Activated CD8-positive, alpha-beta memory T cell treated with anti-CD3 and anti-CD28 coated beads, Interleukin-2, amount 10 ng/mL, durations not matched to agents 7 days and 5 days (primary cell): ENCODE measurements at regions of chr1 and their contacts with region 1.

Region 1: DNA sequence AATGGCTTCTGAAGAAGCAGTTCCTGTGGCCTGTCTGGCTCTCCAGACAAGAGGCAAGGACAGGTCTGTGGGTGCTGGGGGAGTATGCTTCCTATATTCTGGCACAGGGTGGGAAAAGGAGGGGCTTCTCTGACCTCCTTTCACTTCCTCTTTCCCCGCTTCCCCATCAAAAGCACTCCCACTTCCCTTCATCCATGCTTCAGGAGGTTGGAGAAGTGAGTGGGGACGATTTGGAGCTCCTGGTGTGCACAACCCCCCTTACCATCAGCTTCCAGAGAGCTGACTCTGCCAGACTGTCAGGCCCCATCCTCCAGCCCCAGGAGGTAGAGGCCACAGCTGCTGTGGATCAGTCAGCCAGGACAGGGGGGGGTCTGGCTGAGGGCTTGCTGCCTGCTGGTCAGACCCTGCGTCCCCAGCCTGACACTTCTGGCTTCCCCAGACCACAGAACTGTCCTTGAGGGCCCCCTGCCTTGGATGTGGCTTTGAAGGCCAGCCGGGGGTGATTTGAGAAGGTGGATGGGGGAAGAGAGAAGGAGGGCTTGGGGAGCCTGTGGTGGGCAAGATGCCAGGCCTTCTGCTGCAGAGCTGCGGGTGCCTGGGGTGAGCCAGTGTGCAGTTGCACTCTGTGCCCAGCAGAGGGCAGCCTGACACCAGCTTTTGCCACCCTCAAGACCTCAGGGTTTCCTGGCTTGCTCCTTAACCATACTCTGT is 21.5 kb upstream of the TMEM222 start:
- DNase-seq: peak; percentile 76
- ATAC-seq: peak; percentile 87
- H3K4me3 Mint-ChIP-seq: no peak overlapping the region
- H3K27ac Mint-ChIP-seq: no peak overlapping the region
- H3K4me1 Mint-ChIP-seq: peaks cover 6% of the 10 kb centered on the region
- H3K27me3 Mint-ChIP-seq: no peaks in the 10 kb centered on the region

Region 2: DNA sequence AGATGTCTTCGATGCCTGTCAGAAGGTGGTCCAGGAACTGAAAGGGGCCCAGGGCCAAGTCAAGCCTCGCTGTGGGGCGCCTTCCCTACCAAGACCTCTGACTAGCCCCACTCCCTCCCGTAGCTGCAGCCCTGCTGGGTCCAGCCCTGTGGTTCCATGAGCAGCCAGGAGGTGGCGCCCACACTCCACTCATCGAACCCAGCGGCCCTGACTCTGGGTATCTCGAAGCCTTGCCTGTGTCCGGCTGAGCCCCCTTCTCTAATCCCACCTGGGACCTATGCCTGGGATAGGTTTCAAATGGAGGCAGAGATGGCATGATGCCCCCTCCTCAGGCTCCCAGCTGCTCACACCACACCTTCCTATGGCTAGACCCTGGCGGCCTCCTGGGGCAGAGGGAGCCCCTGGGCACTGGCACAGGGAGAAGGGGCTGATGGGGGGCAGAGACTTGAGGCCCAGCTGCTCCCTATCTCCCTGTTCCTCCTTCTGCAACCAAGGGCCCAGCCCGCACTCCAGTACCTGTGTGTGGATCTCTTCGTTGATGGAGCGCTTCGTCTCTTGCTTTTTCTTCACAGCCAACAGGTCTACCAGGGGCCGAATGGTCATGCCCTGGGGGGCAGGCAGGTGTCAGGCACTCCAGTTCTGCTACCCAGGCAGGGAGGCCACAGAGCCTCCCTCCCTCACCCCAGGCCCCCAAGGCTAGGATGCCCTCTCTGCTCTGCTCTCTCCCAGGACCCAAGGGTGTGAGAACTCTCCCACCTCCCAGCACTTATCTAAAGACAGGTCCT is 197.6 kb before region 1 on chr1:
- CTCF ChIA-PET with region 1: interaction called, 34 read pairs
- DNase-seq: peak; percentile 84
- ATAC-seq: peak; percentile 71
- H3K4me3 Mint-ChIP-seq: no peak overlapping the region
- H3K27ac Mint-ChIP-seq: no peak overlapping the region
- H3K4me1 Mint-ChIP-seq: peaks cover 18% of the 10 kb centered on the region
- H3K27me3 Mint-ChIP-seq: no peaks in the 10 kb centered on the region

Region 3: GRCh38 chr1:27314169-27314568 is 13.7 kb after region 1 on chr1:
- CTCF ChIA-PET with region 1: interaction called, 61 read pairs
- DNase-seq: no peak
- ATAC-seq: no peak
- H3K4me3 Mint-ChIP-seq: no peak overlapping the region
- H3K27ac Mint-ChIP-seq: no peak overlapping the region
- H3K4me1 Mint-ChIP-seq: no peaks in the 10 kb centered on the region
- H3K27me3 Mint-ChIP-seq: peaks cover 2% of the 10 kb centered on the region

Region 4: GRCh38 chr1:27357281-27358037 is 57.0 kb after region 1 on chr1:
- CTCF ChIA-PET with region 1: interaction called, 29 read pairs
- DNase-seq: peak; percentile 87
- ATAC-seq: peak; percentile 76
- H3K4me3 Mint-ChIP-seq: peak overlapping the region; percentile 73
- H3K27ac Mint-ChIP-seq: peak overlapping the region; percentile 93
- H3K4me1 Mint-ChIP-seq: peaks cover 44% of the 10 kb centered on the region
- H3K27me3 Mint-ChIP-seq: peaks cover 8% of the 10 kb centered on the region

Region 5: DNA sequence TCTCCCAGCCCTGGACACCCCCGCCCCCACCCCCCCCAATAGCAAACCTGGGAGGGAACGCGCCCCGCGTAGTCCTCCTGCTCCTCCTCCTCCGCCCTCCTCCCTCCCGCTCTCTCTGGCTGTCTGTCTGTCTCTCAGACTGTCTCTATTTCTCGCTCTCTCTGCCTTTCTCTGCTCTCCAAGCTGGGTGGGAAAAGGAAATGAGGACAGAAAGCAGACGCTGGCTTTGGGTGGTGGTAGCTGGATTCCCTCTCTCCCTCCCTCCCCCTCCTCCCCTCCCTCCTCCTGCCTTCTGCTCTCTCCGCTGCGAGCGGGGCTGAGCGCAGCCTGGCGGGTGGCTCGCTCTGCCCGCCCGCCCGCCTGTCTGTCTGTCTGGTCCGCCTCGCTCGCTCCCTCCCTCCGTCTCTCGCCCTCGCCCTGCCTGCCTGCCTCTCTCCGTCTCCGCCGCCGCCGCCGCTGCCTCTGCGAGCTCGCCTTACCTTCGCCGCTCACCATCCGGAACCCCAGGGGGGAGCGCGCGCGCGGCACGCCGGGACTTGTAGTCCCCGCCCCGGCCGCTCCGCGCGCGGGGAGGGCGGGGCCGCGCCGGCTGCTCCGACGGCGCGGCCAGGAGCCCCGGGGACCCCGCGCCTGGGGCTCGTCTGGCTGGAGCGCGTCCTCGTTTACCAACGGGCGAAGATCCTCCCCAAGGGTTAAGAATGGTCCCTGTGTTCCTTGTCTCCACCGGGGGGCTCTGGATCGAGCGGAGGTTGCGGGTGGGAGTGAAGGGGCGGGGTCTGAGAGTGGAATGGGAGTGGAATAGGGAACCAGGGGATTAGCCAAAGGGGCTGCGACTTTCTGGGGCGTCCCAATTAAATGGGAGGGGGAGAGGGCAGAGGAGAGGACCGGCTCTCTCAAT is 303.4 kb after region 1 on chr1 and contains the start of gene AHDC1:
- CTCF ChIA-PET with region 1: interaction called, 24 read pairs
- DNase-seq: peak; percentile 93
- ATAC-seq: peak; percentile 90
- H3K4me3 Mint-ChIP-seq: peak within 1 kb of the TSS; percentile 94
- H3K27ac Mint-ChIP-seq: peak within 1 kb of the TSS; percentile 70
- H3K4me1 Mint-ChIP-seq: peaks cover 37% of the 10 kb centered on the region
- H3K27me3 Mint-ChIP-seq: no peaks in the 10 kb centered on the region
- total RNA-seq, gene AHDC1: 15.8 to 18.5 TPM